ENCODE measurements at regions of chr12 and their contacts with region 1.

Region 1: GRCh38 chr12:49515266-49515665 is 23.6 kb upstream of the KCNH3 start:
- DNase-seq: no peak
- CTCF ChIP-seq: no peak

Region 2: GRCh38 chr12:49342066-49342913 is 173.0 kb before region 1 on chr12:
- CTCF ChIA-PET with region 1: interaction called, 22 read pairs
- POLR2A ChIA-PET with region 1: no interaction called
- DNase-seq: peak; percentile 87
- CTCF ChIP-seq: peak; percentile 81

Region 3: DNA sequence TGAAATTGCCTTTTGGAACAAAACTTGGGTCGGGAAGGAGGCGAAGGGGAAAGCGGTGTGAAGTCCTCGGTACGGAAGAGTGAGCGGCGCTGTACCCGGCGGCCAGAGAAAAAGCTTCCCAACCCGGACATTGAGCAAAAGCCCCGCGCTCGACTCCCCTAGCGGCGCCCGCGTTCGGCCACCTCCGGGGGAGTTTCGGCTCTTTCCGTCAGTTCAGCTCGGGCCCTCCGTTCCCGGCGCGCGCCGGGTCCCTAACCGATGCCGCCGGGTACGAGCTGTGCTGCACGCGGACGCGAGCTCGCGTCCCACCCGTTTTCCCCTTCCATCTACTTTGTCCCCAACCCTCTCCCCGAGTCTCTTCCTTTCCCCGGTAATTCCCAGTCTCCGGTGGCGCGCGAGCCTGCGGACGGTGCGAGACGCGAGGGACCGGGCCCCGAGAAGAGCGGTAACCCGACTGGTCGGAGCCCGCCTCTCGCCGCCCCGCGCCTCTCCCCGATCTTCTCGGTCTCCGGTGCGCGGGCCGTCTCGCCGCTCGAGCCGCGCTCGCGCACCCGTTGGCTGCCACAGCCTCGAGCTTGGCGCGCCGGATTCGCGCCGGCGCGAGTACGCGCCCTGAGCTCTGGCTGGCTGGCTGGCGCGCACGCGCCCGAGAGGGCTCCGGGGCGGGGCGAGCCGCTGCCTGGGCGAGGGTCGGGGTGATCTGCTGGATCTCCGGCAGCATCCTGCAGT is 148.4 kb before region 1 on chr12:
- CTCF ChIA-PET with region 1: interaction called, 410 read pairs
- POLR2A ChIA-PET with region 1: interaction called, 3 read pairs
- DNase-seq: peak; percentile 95
- CTCF ChIP-seq: no peak

Region 4: DNA sequence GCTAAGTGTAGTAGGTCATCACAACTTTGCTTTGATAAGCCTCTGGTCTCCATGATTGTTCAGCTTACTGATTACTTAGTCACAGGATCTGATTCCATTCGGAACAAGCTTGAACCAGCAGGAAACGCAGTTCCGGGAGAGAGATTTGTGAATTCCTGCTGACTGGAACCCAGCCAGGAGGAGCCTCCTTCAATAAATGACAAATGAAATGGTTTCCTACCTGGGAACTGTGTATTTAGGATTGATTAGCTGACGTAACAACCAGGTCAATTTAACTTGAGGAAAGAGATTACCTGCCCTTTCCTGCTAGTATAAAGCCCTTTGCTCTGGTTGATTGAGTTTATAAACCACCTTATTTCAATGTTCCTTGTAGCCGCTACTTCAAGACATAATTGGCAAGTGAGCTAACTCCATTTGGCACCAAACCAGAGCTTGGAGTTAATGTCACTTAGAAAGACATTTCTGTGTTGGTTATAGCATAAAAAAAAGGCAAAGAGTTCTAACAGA is 11.5 kb before region 1 on chr12:
- CTCF ChIA-PET with region 1: interaction called, 40 read pairs
- POLR2A ChIA-PET with region 1: no interaction called
- DNase-seq: no peak
- CTCF ChIP-seq: no peak

Region 5: GRCh38 chr12:49538510-49539403 is 23.5 kb after region 1 on chr12 and contains the start of gene KCNH3:
- CTCF ChIA-PET with region 1: interaction called, 37 read pairs
- POLR2A ChIA-PET with region 1: no interaction called
- DNase-seq: peak; percentile 94
- CTCF ChIP-seq: no peak

Region 6: GRCh38 chr12:49909826-49910225 is 394.6 kb after region 1 on chr12:
- CTCF ChIA-PET with region 1: no interaction called
- POLR2A ChIA-PET with region 1: no interaction called
- DNase-seq: no peak
- CTCF ChIP-seq: no peak